ENCODE measurements at regions of chr4 and their contacts with region 1.

Region 1: DNA sequence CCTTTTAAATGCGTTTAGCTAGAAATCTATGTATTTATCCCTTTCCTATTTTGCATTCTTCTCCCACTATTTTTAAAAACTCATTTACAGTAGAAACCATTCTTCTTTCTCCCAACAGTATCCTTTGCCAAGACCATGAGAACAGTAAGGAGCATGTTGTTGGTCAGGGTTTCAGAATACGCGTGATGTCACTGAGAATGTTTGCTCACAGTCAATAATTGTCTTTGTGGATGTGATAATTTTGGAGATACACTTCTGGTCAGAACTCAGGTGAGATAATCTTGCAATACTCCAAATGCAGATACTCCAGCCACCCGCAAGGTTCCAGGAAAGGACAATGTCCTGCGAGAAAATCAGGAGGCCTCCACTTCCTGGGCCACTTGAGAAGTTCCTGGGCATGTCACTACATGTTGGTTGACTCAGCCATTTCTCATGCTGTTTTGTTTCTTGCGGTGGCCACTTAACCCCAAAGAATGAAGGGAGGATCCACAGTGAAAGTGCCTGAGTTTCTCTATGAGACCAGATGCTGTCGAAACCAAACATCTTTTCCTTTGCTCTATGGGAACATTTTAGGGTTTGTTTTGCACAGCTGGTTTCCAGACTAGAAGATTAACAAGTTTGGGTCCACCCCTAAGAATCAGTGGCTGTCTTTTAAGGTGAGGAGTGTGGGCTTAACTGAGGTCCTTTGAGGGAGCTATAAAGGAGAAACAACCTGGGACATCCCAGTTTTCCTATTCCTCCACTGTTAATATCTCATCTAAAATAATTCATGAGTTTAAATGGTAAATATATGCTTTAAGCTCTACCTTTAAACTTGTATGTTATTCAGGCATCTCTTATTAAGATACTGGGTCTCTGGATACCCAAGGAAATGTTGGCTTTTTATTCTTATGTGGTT is 116.0 kb downstream of the SOWAHB start:
- DNase-seq: peak in 1 of 2 experiments; percentile 74
- H3K4me3 ChIP-seq: no peak overlapping the region
- H3K27ac ChIP-seq: peak overlapping the region; percentile 35; the same call in 1 of the 2 replicates
- H3K4me1 ChIP-seq: no peaks in the 10 kb centered on the region
- H3K27me3 ChIP-seq: no peaks in the 10 kb centered on the region
- CTCF ChIP-seq: no peak

Region 2: GRCh38 chr4:76570141-76570973 is 211.6 kb before region 1 on chr4:
- CTCF ChIA-PET with region 1: no interaction called
- POLR2A ChIA-PET with region 1: no interaction called
- intact Hi-C with region 1: no loop called
- DNase-seq: peak; percentile 27 to 90
- H3K4me3 ChIP-seq: peak overlapping the region; percentile 30; the same call in 1 of the 2 replicates
- H3K27ac ChIP-seq: peak overlapping the region; percentile 73
- H3K4me1 ChIP-seq: peaks cover 36% of the 10 kb centered on the region
- H3K27me3 ChIP-seq: no peaks in the 10 kb centered on the region
- CTCF ChIP-seq: no peak

Region 3: GRCh38 chr4:76708971-76709771 is 72.8 kb before region 1 on chr4:
- CTCF ChIA-PET with region 1: no interaction called
- POLR2A ChIA-PET with region 1: no interaction called
- intact Hi-C with region 1: no loop called
- DNase-seq: no peak
- H3K4me3 ChIP-seq: no peak overlapping the region
- H3K27ac ChIP-seq: no peak overlapping the region
- H3K4me1 ChIP-seq: peaks cover 32% of the 10 kb centered on the region
- H3K27me3 ChIP-seq: no peaks in the 10 kb centered on the region
- CTCF ChIP-seq: no peak

Region 4: GRCh38 chr4:76803522-76803921 is 21.6 kb after region 1 on chr4:
- CTCF ChIA-PET with region 1: no interaction called
- POLR2A ChIA-PET with region 1: interaction called, 6 read pairs
- intact Hi-C with region 1: loop called (anchors 1 kb)
- DNase-seq: peak; percentile 78 to 94
- H3K4me3 ChIP-seq: no peak overlapping the region
- H3K27ac ChIP-seq: peak overlapping the region; percentile 59
- H3K4me1 ChIP-seq: peaks cover 19% of the 10 kb centered on the region
- H3K27me3 ChIP-seq: no peaks in the 10 kb centered on the region
- CTCF ChIP-seq: no peak

Region 5: DNA sequence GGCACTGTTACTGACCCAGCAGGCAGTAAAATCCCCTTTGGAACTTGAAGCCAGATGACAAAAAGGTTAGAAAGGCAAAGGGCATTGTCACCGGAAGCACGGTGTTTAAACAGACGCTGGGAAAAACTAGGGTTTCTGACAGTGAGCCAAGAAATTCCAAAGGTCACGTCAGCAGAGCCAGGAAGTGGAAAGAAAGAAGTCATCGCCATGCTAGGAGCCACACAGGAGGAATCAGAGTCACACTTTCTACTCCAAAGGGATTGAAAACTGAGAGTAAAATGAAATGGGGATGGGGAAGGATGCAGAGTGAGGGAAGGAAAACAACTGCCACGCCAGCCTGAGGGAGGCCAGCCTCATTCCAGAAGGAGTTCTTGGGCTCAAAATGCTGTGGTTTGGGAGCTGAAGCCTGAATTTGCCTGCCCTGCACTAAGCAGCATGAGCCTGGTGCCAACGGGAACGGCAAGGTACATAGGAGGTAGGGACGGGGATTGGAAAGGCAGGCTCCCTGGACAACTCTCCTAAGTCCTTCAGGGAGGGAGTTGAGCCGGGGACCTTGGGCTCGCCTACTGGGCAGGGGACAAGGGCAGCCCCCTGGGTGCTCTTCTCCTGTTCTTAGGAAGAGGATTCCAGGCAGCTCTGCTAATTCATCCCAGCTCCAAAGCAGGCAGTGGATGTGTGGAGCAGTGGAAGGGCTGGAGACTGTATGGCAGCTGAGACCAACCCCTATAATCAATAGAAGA is 49.2 kb after region 1 on chr4:
- CTCF ChIA-PET with region 1: no interaction called
- POLR2A ChIA-PET with region 1: no interaction called
- intact Hi-C with region 1: loop called (anchors 2 kb)
- DNase-seq: peak; percentile 26 to 71
- H3K4me3 ChIP-seq: peak overlapping the region; percentile 33; the same call in 1 of the 2 replicates
- H3K27ac ChIP-seq: peak overlapping the region; percentile 42; the same call in 1 of the 2 replicates
- H3K4me1 ChIP-seq: peaks cover 16% of the 10 kb centered on the region
- H3K27me3 ChIP-seq: no peaks in the 10 kb centered on the region
- CTCF ChIP-seq: no peak

Region 6: GRCh38 chr4:76867880-76868655 is 86.1 kb after region 1 on chr4:
- CTCF ChIA-PET with region 1: no interaction called
- POLR2A ChIA-PET with region 1: no interaction called
- intact Hi-C with region 1: loop called (anchors 5 kb)
- DNase-seq: peak; percentile 79 to 82
- H3K4me3 ChIP-seq: peak overlapping the region; percentile 38; the same call in 1 of the 2 replicates
- H3K27ac ChIP-seq: peak overlapping the region; percentile 75
- H3K4me1 ChIP-seq: peaks cover 5% of the 10 kb centered on the region; the same call in 1 of the 2 replicates
- H3K27me3 ChIP-seq: no peaks in the 10 kb centered on the region
- CTCF ChIP-seq: no peak

Region 7: DNA sequence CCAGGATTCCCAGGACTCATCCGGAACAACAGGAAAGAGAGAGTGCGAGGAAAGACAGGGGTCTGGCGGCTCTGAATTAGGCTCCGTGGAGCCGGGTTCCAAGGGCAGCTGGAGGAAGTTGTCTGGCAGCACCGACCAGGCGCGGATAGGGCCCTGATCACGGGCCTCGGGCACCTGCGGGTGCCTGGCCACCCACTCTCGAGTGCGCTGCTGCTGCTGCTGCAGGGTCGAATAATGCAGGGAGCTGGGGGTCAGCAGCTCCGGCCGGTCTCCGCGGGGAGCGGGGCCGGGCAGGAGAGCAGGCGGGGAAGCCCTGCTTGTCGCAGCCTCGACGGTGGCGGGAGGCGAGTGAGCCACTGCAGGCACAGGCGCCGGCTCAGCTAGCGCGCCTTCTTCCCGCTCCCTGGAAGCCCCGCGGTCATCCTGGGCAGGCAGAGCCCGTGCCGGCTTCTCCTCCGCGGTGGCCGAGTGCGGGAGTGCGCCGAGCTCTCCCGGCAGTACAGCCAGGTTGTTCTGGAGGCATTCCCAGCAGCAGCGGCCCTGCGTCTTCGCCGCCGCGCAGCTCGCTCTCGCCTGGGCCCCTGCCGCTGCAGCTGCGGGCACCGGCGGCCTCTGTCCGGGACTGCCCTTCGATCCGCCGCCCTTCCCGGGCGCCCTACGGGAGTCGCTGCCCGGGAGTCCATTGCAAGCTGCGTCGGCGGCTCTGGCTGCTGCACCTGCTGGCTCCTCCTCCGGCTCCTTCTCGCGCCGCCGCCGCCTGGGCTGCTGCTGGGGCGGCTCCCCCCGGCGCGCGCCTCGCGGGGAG is 115.0 kb after region 1 on chr4:
- CTCF ChIA-PET with region 1: no interaction called
- POLR2A ChIA-PET with region 1: no interaction called
- intact Hi-C with region 1: loop called (anchors 2 kb)
- DNase-seq: peak in 1 of 2 experiments; percentile 44
- H3K4me3 ChIP-seq: peak overlapping the region; percentile 76
- H3K27ac ChIP-seq: peak overlapping the region; percentile 68; the same call in 1 of the 2 replicates
- H3K4me1 ChIP-seq: peaks cover 38% of the 10 kb centered on the region
- H3K27me3 ChIP-seq: no peaks in the 10 kb centered on the region
- CTCF ChIP-seq: no peak

Region 8: DNA sequence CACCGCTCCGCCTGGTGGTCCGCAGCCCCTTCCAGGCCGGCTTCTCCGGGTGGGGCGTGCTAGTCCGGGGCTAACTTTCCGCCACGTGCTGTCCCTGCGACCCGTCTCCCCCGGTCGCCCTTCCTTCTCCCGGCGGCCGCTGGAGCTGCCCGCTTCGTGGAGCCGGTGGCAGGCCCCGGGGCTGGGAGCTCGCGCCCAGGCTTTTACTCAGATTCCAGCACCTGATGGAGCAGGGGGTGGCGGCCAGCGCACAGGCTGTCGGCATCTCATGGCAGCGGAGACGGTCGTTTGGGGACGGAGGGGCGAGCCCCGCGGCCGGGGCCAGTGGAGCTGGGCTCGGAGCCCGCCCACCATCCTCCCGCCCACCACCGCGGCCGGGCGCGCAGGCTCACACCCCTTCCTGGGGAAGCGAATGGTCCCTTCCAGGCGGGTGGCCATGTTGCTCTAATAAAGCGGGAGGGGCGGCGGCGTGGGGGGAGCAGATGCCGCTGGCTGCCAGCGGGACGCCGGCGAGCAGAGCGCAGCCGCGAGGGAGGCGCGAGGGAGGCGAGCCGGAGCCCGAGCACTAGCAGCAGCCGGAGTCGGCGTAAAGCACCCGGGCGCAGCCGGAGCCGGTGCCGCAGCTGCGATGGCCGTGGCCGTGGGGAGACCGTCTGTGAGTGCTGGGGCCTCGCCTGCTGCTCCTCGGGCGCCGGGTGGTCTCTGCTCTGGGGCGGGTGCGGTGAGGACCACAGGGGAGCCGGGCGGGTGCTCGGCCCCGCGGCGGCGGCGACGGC is 167.5 kb after region 1 on chr4 and contains the start of gene SEPTIN11:
- CTCF ChIA-PET with region 1: no interaction called
- POLR2A ChIA-PET with region 1: interaction called, 7 read pairs
- intact Hi-C with region 1: loop called (anchors 5 kb)
- DNase-seq: peak; percentile 67 to 85
- H3K4me3 ChIP-seq: peak within 1 kb of the TSS; percentile 70
- H3K27ac ChIP-seq: peak within 1 kb of the TSS; percentile 51
- H3K4me1 ChIP-seq: peaks cover 14% of the 10 kb centered on the region; the same call in 1 of the 2 replicates
- H3K27me3 ChIP-seq: no peaks in the 10 kb centered on the region
- CTCF ChIP-seq: no peak
- total RNA-seq, gene SEPTIN11: 38.8 and 48.1 TPM in 2 replicates

Region 9: DNA sequence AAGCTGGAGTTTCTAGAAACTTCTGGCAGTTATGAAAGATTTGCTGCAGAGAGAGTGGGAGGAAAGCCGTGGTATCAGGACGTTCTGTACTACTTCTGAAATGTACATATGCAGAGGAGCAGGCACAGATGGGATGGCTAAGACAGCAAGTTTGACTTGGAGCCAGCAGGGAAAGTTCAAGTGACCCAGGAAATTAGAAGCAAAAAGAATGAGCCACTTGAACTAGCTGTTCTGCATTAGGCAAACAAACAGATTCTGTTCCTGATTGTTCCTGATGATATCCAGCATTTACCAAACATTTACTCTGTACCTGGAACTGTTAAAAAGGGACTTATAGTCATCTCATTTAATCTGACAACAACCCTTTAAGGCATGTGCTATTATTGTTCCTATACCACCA is 782.3 kb after region 1 on chr4:
- CTCF ChIA-PET with region 1: no interaction called
- POLR2A ChIA-PET with region 1: interaction called, 10 read pairs
- intact Hi-C with region 1: no loop called
- DNase-seq: no peak
- H3K4me3 ChIP-seq: no peak overlapping the region
- H3K27ac ChIP-seq: no peak overlapping the region
- H3K4me1 ChIP-seq: no peaks in the 10 kb centered on the region
- H3K27me3 ChIP-seq: no peaks in the 10 kb centered on the region
- CTCF ChIP-seq: no peak

Measured in PC-9 (cell line).